Calu3 (cell line): ENCODE measurements at regions of chr1 and their contacts with region 1.

Region 1: GRCh38 chr1:47948126-47948525 is 49.1 kb downstream of the TRABD2B start:
- DNase-seq: peak; percentile 73
- H3K4me3 Mint-ChIP-seq: no peak overlapping the region
- H3K27ac Mint-ChIP-seq: no peak overlapping the region
- H3K4me1 Mint-ChIP-seq: peaks cover 53% of the 10 kb centered on the region
- H3K27me3 Mint-ChIP-seq: no peaks in the 10 kb centered on the region
- CTCF ChIP-seq: peak; percentile 62

Region 2: GRCh38 chr1:47997289-47998200 is 49.4 kb after region 1 on chr1 and contains the start of gene TRABD2B:
- CTCF ChIA-PET with region 1: no interaction called
- intact Hi-C with region 1: loop called (anchors 5 kb)
- DNase-seq: peak; percentile 85
- H3K4me3 Mint-ChIP-seq: peak within 1 kb of the TSS; percentile 72
- H3K27ac Mint-ChIP-seq: peak within 1 kb of the TSS; percentile 67
- H3K4me1 Mint-ChIP-seq: peaks cover 11% of the 10 kb centered on the region
- H3K27me3 Mint-ChIP-seq: peaks cover 56% of the 10 kb centered on the region
- CTCF ChIP-seq: peak; percentile 90
- total RNA-seq, gene TRABD2B: 0.10 and 0.42 TPM in 2 replicates

Region 3: GRCh38 chr1:48061162-48062136 is 113.3 kb after region 1 on chr1:
- CTCF ChIA-PET with region 1: interaction called, 6 read pairs
- intact Hi-C with region 1: loop called (anchors 1 kb)
- DNase-seq: peak; percentile 62
- H3K4me3 Mint-ChIP-seq: no peak overlapping the region
- H3K27ac Mint-ChIP-seq: no peak overlapping the region
- H3K4me1 Mint-ChIP-seq: peaks cover 19% of the 10 kb centered on the region
- H3K27me3 Mint-ChIP-seq: peaks cover 32% of the 10 kb centered on the region
- CTCF ChIP-seq: no peak